Mammary epithelial cell (primary cell): ENCODE measurements at regions of chr7 and their contacts with region 1.

Region 1: DNA sequence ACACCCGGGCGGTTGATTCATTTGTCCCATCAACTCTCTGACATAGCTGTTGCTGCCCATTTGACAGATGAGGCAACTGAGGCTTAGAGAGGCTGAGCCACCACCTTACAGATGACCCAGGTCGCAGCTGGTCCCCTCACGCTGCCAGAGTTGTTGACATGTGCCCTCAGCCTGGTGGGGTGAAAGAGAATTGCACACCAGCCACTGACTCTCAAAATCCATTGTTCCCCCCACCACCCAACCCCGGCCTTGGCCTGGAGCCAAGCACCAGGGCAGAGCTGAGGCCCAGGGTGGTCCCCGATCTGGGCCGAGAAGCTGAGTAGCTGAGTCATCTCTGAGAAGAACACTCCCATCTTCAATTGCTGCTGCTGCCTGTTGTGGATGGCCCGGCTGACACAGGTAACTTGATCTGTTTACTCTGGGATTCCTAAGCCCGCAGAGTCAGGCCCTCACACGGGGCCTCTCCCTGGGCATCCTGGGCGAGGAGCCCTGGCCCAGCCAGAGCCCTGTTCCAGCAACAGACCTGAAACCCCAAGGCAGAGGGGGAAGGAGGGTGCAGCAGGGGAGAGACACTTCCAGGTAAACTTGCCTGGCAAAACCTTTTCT is 27.5 kb downstream of the PVRIG start:
- DNase-seq: peak; percentile 84
- H3K4me3 ChIP-seq: no peak overlapping the region
- H3K27ac ChIP-seq: no peak overlapping the region
- H3K4me1 ChIP-seq: peaks cover 13% of the 10 kb centered on the region
- H3K27me3 ChIP-seq: no peaks in the 10 kb centered on the region
- CTCF ChIP-seq: no peak

Region 2: GRCh38 chr7:100015232-100016209 is 231.7 kb before region 1 on chr7 and contains the start of gene ZKSCAN1:
- CTCF ChIA-PET with region 1: no interaction called
- dilution Hi-C with region 1: no loop called
- in situ Hi-C with region 1: no loop called
- intact Hi-C with region 1: no loop called
- DNase-seq: peak; percentile 86
- H3K4me3 ChIP-seq: peak within 1 kb of the TSS; percentile 68 to 98 (median 81)
- H3K27ac ChIP-seq: peak within 1 kb of the TSS; percentile 87
- H3K4me1 ChIP-seq: peaks cover 20% of the 10 kb centered on the region
- H3K27me3 ChIP-seq: no peaks in the 10 kb centered on the region
- CTCF ChIP-seq: no peak
- total RNA-seq, gene ZKSCAN1: 42.7 to 80.8 TPM

Region 3: GRCh38 chr7:100200693-100201092 is 46.6 kb before region 1 on chr7:
- CTCF ChIA-PET with region 1: no interaction called
- dilution Hi-C with region 1: loop called (anchors 5 kb)
- in situ Hi-C with region 1: no loop called
- intact Hi-C with region 1: no loop called
- DNase-seq: no peak
- H3K4me3 ChIP-seq: no peak overlapping the region
- H3K27ac ChIP-seq: no peak overlapping the region
- H3K4me1 ChIP-seq: no peaks in the 10 kb centered on the region
- H3K27me3 ChIP-seq: peaks cover 5% of the 10 kb centered on the region
- CTCF ChIP-seq: no peak